Heart left ventricle (tissue), 16 donors: ENCODE measurements at regions of chr19 and their contacts with region 1.

Region 1: GRCh38 chr19:9945319-9945966 is 9.1 kb upstream of the OLFM2 start:
- DNase-seq: peak; percentile 86 to 92 (median 91)
- ATAC-seq: peak; percentile 92 to 97 (median 96)
- H3K4me3 ChIP-seq: no peak overlapping the region
- H3K27ac ChIP-seq: peak overlapping the region in 11 of 12 donors; percentile 49 to 80 (median 71)
- H3K4me1 ChIP-seq: peaks cover 0 to 25% (median 6%) of the 10 kb centered on the region in 12 donors
- H3K27me3 ChIP-seq: peaks cover 0 to 6% (median 0%) of the 10 kb centered on the region in 9 donors
- CTCF ChIP-seq: peak in 4 of 12 donors; percentile 22 to 48 (median 32)
- POLR2A ChIP-seq: no peak

Region 2: DNA sequence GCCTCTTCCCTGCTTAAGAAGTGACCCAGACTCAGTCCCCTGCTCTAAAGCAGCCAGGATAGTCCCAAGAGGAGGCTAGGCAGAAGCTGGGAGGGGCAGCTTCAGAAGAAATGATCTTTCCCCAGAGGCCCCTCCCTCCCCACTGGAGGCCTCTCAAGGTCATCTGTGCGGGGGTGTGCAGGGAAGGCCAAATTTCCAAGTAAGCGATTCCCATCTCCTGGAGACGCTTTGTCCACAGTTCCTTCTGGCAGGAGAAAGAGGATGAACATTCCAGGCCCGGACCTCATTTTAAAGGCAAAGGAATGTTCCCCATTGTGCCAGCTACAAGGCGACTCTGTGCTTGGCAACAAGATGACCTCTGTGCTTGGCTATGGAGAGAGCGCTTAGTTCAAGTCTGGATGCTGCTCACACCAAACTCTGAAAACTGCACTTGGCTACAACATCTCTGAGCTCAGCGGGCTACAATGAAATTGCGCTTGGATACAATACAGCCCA is 41.4 kb after region 1 on chr19:
- intact Hi-C with region 1: loop called in 2 of 10 experiments (anchors 5 kb)
- DNase-seq: peak; percentile 27 to 73 (median 62)
- ATAC-seq: peak; percentile 82 to 89 (median 85)
- H3K4me3 ChIP-seq: no peak overlapping the region
- H3K27ac ChIP-seq: peak overlapping the region in 8 of 12 donors; percentile 31 to 76 (median 53)
- H3K4me1 ChIP-seq: peaks cover 0 to 20% (median 5%) of the 10 kb centered on the region in 12 donors
- H3K27me3 ChIP-seq: peaks cover 0 to 13% (median 0%) of the 10 kb centered on the region in 9 donors
- CTCF ChIP-seq: no peak
- POLR2A ChIP-seq: no peak

Region 3: GRCh38 chr19:10000171-10000826 is 54.9 kb after region 1 on chr19:
- intact Hi-C with region 1: loop called in 4 of 10 experiments (anchors 5 to 10 kb)
- DNase-seq: peak in 3 of 5 donors; percentile 60 to 64 (median 61)
- ATAC-seq: no peak
- H3K4me3 ChIP-seq: no peak overlapping the region
- H3K27ac ChIP-seq: peak overlapping the region in 2 of 12 donors; percentile 18 to 43
- H3K4me1 ChIP-seq: peaks cover 0 to 29% (median under 1%) of the 10 kb centered on the region in 12 donors
- H3K27me3 ChIP-seq: peaks cover 0 to 28% (median 2%) of the 10 kb centered on the region in 9 donors
- CTCF ChIP-seq: peak; percentile 46 to 74 (median 60)
- POLR2A ChIP-seq: no peak

Region 4: DNA sequence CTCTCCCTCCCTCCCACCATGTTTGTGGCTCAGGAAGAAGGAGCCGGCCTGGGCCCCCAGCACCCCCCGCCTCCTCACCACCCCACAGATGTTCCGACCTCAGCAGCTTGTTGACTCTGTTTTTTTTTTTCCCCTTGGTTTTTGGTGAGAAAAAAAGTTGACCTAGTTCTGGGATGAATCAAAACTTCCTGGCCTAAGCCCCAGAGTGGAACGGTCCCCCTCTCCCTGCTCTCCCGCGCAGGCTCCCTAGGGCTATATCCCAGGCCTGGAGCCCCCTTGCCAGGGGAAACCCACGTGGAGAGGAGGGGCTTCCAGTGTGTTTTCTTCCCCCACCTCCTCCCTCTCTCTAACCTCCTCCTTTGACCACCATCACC is 60.9 kb after region 1 on chr19:
- intact Hi-C with region 1: loop called in 4 of 10 experiments (anchors 1 to 10 kb)
- DNase-seq: peak; percentile 68 to 78 (median 72)
- ATAC-seq: peak; percentile 29 to 58 (median 48)
- H3K4me3 ChIP-seq: peak overlapping the region in 7 of 12 donors; percentile 3 to 30 (median 14)
- H3K27ac ChIP-seq: peak overlapping the region; percentile 55 to 90 (median 78)
- H3K4me1 ChIP-seq: peaks cover 0 to 55% (median 9%) of the 10 kb centered on the region in 12 donors
- H3K27me3 ChIP-seq: peaks cover 6 to 59% (median 27%) of the 10 kb centered on the region in 9 donors
- CTCF ChIP-seq: no peak
- POLR2A ChIP-seq: no peak